K562 (cell line): ENCODE measurements at regions of chr14 and their contacts with region 1.

Region 1: DNA sequence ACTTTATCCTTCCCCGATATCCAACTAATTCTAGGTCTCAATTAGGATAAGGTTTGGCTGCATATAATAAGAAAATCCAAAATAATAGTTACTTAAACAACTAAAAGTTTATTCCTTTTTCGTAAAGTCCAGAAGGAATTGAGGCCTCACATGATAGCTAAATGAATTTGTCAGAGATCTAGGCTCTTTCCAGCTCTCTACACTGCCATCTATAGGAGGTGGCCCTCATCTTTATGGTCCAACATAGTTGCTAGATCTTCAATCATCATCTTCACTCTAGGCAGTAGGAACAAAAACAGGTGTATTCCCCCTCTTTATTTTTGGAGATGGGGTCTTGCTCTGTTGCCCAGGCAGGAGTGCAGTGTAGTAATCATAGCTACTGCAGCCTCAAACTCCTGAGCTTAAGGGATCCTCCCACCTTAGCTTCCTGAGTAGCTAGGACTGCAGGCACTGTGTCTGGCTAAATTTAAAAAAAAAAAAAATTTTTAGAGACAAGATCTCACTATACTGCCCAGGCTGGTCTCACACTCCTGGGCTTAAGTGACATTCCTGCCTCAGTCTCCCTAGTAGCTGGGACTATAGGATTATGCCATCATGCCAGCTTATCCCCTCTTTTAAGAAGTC is 46.5 kb upstream of the SAV1 start:
- DNase-seq: peak; percentile 6 to 32 (median 19)
- ATAC-seq: peak; percentile 84
- H3K4me3 ChIP-seq: no peak overlapping the region
- H3K27ac ChIP-seq: no peak overlapping the region
- H3K4me1 ChIP-seq: no peaks in the 10 kb centered on the region
- H3K27me3 ChIP-seq: no peaks in the 10 kb centered on the region; a peak in 2 of 5 replicates
- CTCF ChIP-seq: peak; percentile 14 to 54 (median 52); a peak in 4 of 6 replicates
- EP300 ChIP-seq: no peak
- POLR2A ChIP-seq: no peak
- RAD21 ChIP-seq: peak in 1 of 2 experiments; percentile 65; a peak in 3 of 4 replicates

Region 2: GRCh38 chr14:50303744-50304471 is 410.7 kb before region 1 on chr14:
- CTCF ChIA-PET with region 1: no interaction called
- POLR2A ChIA-PET with region 1: no interaction called
- in situ Hi-C with region 1: no loop called
- intact Hi-C with region 1: no loop called
- DNase-seq: peak in 2 of 4 experiments; percentile 37 to 67
- ATAC-seq: peak; percentile 84
- H3K4me3 ChIP-seq: no peak overlapping the region
- H3K27ac ChIP-seq: peak overlapping the region; percentile 58; the same call in 1 of the 3 replicates
- H3K4me1 ChIP-seq: peaks cover 8 to 13% of the 10 kb centered on the region in 2 experiments; a peak in 4 of 5 replicates
- H3K27me3 ChIP-seq: no peaks in the 10 kb centered on the region
- CTCF ChIP-seq: no peak
- EP300 ChIP-seq: no peak; the same call in 1 of the 2 replicates
- POLR2A ChIP-seq: no peak
- RAD21 ChIP-seq: no peak

Region 3: GRCh38 chr14:50619556-50620141 is 94.9 kb before region 1 on chr14:
- CTCF ChIA-PET with region 1: no interaction called
- POLR2A ChIA-PET with region 1: no interaction called
- in situ Hi-C with region 1: no loop called
- intact Hi-C with region 1: loop called (anchors 5 kb)
- DNase-seq: peak in 2 of 4 experiments; percentile 17 to 31
- ATAC-seq: peak; percentile 90
- H3K4me3 ChIP-seq: no peak overlapping the region
- H3K27ac ChIP-seq: no peak overlapping the region
- H3K4me1 ChIP-seq: no peaks in the 10 kb centered on the region
- H3K27me3 ChIP-seq: no peaks in the 10 kb centered on the region
- CTCF ChIP-seq: peak; percentile 28 to 58 (median 51); a peak in 5 of 6 replicates
- EP300 ChIP-seq: no peak
- POLR2A ChIP-seq: no peak
- RAD21 ChIP-seq: peak; percentile 20 to 66; a peak in 2 of 4 replicates